ENCODE measurements at regions of chr3 and their contacts with region 1.

Region 1: DNA sequence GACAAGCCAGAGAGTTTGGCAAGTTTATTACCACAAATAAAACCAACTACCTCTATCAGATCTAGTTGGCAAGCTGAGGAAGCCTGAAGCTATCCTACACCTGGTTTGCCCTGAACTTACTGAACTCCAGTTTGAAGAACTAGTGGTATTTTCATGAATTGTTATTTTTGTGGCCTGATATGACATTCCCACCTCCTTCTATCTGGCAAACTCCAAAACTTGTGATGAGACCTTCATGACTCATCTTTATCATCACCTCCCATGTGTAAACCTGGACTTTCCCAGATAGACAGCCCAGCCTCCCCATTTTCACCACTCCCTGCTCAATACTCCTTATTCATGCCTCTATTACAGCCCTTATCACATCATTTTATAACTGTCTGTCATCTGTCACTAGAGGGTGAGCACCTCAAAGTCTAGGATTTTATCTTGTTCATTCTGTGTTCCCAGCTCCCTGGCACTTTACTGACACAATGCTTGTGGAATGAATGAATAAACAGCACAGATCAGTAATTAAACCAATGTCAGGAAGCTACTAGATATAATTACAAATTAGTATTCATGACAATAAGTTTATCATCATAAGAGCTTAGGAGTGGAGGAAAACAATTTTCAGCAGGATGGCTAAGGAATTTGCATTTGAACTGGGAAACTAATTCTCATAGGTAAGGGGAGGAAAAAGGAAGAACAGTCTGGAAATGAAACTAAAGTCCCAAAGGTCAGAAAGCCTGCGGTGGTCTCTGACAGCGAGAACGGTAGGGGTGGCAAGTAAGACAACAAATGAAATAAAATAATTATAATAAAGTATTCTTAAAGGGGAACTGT is 13.2 kb upstream of the TRANK1 start:
- DNase-seq: peak; percentile 45
- H3K4me3 ChIP-seq: no peak overlapping the region
- CTCF ChIP-seq: no peak

Region 2: DNA sequence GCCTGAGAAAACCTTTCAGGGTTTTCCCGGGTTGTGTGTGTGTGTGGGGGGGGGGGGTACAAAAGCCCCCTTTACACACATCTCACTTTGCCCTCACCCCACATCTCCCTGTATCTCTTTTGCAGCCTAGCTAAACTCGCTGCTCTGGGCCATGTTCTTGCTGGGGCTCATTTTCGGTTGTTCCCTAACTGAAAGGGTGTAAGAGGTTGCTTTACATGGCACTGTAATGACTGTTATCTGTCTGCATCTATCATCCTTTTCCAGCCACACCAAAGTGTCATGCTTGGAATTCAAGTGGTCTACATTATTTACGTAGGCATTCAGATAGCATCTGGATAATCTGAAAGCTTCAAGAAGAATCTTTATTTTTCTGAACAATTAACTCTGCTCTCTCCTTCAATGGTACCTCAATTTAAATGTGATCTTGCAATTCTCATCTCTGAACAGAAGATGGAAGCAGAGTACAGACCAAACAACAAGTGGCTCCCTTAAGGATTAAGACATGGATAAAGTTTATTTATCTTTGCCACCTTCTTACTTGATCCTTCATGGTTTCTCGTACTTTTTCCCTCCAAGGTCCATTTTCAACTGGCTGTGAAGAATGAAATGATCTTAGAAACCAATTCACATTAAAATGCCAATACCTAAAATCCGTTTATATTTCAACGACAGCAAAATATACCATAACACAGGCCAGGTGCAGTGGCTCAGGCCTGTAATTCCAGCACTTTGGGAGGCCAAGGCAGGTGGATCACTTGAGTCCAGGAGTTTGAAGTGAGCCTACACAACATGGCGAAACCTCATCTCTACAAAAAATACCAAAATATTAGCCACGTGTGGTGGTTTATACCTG is 228.6 kb before region 1 on chr3:
- CTCF ChIA-PET with region 1: interaction called, 80 read pairs
- POLR2A ChIA-PET with region 1: no interaction called
- DNase-seq: peak; percentile 28
- H3K4me3 ChIP-seq: no peak overlapping the region
- CTCF ChIP-seq: peak; percentile 48

Region 3: DNA sequence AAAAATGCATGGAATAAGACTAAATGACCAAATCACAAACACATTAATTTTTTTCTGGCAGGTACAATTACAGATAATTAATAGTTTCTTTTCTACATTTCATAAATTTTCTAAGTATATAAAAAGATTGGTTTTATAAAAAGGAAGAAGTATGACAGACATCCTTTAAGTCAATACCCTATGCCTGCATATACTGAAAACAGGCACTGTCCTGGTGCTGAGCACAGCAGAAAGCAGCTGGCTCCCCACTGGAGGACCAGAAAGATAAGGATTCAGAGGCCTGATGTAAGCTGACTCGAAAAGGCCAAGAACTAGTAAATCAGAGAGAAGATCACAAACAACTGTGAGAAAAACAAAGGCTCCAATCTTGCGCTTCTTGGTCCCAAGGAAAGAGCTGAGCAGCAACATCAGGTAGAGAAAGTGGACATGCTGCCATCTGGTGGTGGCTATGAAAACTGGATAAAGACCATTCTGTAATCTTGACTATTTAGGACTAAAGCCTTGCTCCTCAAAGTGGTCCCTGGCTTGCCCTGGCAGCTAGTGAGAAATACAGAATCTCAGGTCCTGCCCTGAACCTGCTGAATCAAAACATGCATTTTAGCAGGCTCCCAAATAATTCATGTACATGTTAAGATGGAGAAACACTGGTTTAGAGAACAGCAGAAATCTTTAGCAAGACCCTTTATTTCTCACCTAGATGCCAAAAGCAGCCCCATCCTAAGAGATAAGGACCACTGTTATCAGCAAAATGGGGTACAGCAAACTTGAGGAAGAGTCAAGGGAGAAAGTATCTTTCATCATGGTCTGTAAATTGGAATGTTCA is 89.2 kb before region 1 on chr3:
- CTCF ChIA-PET with region 1: interaction called, 19 read pairs
- POLR2A ChIA-PET with region 1: no interaction called
- DNase-seq: no peak
- H3K4me3 ChIP-seq: no peak overlapping the region
- CTCF ChIP-seq: peak; percentile 72

Region 4: DNA sequence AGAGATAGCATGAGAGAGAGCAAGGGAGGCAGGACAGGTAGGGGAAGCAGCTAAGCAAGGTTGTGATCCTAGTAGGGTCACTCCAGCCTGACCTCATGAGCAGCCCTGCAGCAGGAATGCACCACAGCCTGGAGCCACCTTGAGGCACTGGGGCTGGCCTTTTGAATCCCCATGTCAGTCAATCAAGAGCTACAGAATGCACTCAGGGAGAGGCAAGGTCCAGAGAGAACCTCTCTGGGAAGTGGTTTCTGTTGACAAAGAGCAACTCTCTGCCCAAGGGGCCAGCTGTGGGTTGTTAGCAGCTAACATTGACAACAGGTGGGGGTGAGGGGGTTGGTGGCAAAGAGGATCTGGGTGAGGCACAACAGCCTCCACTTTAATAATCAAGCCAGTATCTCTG is 67.8 kb before region 1 on chr3:
- CTCF ChIA-PET with region 1: no interaction called
- POLR2A ChIA-PET with region 1: no interaction called
- DNase-seq: no peak
- H3K4me3 ChIP-seq: no peak overlapping the region
- CTCF ChIP-seq: no peak

Region 5: GRCh38 chr3:36928220-36928619 is 29.9 kb before region 1 on chr3:
- CTCF ChIA-PET with region 1: interaction called, 10 read pairs
- POLR2A ChIA-PET with region 1: no interaction called
- DNase-seq: no peak
- H3K4me3 ChIP-seq: no peak overlapping the region
- CTCF ChIP-seq: no peak

Region 6: DNA sequence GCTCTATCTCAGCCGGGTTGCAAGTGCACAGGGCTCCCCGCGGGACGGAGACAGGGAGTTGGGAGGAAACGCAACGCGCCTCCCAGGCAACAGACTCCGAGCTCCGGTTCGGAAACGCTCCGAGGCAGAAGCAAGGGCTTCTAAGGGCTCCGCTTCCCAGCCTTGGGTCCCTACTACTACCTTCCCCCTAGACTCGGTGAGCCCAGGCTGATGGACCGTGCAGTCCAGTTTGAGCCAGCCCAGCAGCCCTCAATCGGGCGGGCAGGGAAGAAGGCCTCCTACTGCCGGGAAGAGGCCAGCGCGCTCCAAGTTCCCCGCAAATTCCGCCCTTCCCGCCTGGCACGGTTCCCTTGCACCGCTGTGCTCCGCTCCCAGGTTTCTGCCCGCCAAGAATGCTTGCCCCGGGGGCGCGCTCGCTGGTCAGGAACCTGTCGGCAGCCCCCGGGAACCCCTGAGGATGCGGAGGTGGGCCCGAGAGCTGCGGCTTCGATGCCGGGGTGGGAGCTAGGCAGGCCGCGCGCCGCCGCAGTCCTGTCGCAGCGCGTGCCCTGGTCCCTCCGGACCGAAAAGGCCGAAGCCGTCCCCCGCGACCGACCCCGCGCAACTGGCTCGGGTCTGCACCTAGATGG is 13.9 kb before region 1 on chr3:
- CTCF ChIA-PET with region 1: interaction called, 40 read pairs
- POLR2A ChIA-PET with region 1: no interaction called
- DNase-seq: no peak
- H3K4me3 ChIP-seq: peak overlapping the region; percentile 63
- CTCF ChIP-seq: peak; percentile 19

Region 7: DNA sequence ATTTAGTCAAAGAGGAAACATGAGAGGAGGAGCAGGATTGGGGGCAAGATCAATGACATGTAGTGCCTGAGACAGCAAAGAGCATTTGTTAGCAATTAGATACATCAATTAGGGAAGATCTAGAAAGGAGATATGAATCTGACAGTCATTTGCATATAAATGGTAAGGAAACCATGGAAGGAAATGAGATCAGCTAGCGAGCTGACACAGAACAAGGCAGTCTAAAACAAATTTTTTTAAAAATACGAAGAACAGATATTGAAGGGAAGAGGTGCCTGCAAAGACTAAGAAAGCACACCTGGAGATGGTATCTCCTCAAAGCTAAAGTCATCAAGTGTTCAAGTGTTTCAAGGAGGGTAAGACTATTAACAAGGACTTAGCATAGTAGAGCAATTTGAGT is 30.3 kb after region 1 on chr3:
- CTCF ChIA-PET with region 1: interaction called, 20 read pairs
- POLR2A ChIA-PET with region 1: no interaction called
- DNase-seq: no peak
- H3K4me3 ChIP-seq: no peak overlapping the region
- CTCF ChIP-seq: no peak

Region 8: DNA sequence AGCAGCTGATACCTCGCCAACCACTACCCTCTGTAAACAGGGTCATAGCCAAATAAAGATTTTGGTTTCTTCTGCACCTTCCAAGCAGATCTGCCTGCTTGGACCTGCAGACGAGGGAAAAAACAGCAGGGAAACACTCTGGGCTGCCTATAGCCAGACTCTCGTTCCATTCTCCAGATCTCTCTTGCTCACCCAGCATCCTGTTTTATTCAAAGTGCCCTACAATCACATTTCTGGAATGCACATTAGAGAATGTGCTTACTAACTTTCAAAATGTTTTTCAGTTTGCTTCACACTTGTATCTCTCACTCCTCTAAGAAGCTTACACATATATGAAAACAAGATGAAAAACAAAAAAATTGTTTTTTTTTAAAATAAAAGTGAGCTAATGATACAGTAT is 106.7 kb after region 1 on chr3:
- CTCF ChIA-PET with region 1: no interaction called
- POLR2A ChIA-PET with region 1: no interaction called
- DNase-seq: no peak
- H3K4me3 ChIP-seq: no peak overlapping the region
- CTCF ChIP-seq: no peak

Measured in AG04449 (cell line).